ENCODE measurements at regions of chr16 and their contacts with region 1.

Region 1: GRCh38 chr16:48623304-48624016 is 13.5 kb upstream of the N4BP1 start:
- DNase-seq: peak; percentile 88
- H3K4me3 ChIP-seq: peak overlapping the region; percentile 30 to 50 (median 45)
- H3K27ac ChIP-seq: peak overlapping the region; percentile 72 to 74 (median 74)
- H3K4me1 ChIP-seq: peaks cover 0 to 16% (median 12%) of the 10 kb centered on the region in 4 donors
- H3K27me3 ChIP-seq: no peaks in the 10 kb centered on the region
- CTCF ChIP-seq: peak; percentile 79 to 97 (median 93)
- EP300 ChIP-seq: no peak
- POLR2A ChIP-seq: no peak

Region 2: DNA sequence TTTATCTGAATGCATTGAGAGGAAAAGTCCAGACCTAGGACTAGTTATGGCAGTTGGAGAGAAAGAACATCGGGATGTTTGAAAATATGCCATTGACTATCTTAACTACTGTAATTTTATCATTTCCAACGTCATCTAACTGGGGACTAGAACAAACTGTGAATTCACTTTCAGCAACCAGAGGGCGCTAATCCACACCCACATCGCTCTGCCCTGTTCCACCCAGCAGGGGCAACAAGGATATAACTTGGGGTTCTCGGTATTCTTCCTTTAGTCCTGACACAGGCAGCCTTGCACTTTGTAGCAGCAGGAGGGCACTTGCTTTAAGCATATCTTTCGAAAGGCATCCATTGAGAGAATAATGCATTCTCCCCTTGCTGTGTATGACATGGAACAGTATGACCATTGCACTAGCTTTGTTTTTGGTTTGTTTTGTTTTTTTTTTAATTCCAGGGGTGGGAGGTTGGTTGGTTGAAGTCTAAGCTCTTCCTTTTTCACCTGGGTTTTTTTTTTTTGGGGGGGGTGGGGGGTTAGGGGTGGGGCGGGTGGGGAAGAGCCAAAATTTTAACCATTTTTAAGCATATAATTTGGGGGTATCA is 269.8 kb before region 1 on chr16:
- intact Hi-C with region 1: loop called (anchors 2 kb)
- DNase-seq: peak; percentile 79
- H3K4me3 ChIP-seq: no peak overlapping the region
- H3K27ac ChIP-seq: no peak overlapping the region
- H3K4me1 ChIP-seq: peaks cover 0 to 7% (median 0%) of the 10 kb centered on the region in 4 donors
- H3K27me3 ChIP-seq: no peaks in the 10 kb centered on the region
- CTCF ChIP-seq: peak; percentile 76 to 89 (median 84)
- EP300 ChIP-seq: no peak
- POLR2A ChIP-seq: no peak

Region 3: GRCh38 chr16:48535831-48536613 is 87.4 kb before region 1 on chr16:
- intact Hi-C with region 1: loop called (anchors 5 kb)
- DNase-seq: peak; percentile 82
- H3K4me3 ChIP-seq: no peak overlapping the region
- H3K27ac ChIP-seq: peak overlapping the region; percentile 45 to 80 (median 67)
- H3K4me1 ChIP-seq: peaks cover 0 to 39% (median 34%) of the 10 kb centered on the region in 4 donors
- H3K27me3 ChIP-seq: no peaks in the 10 kb centered on the region
- CTCF ChIP-seq: no peak
- EP300 ChIP-seq: no peak
- POLR2A ChIP-seq: no peak

Region 4: GRCh38 chr16:48596326-48596725 is 27.1 kb before region 1 on chr16:
- intact Hi-C with region 1: no loop called
- DNase-seq: no peak
- H3K4me3 ChIP-seq: no peak overlapping the region
- H3K27ac ChIP-seq: no peak overlapping the region
- H3K4me1 ChIP-seq: peaks cover 0 to 41% (median 22%) of the 10 kb centered on the region in 4 donors
- H3K27me3 ChIP-seq: no peaks in the 10 kb centered on the region
- CTCF ChIP-seq: no peak
- EP300 ChIP-seq: no peak
- POLR2A ChIP-seq: no peak